ENCODE measurements at regions of chr5 and their contacts with region 1.

Region 1: GRCh38 chr5:172144291-172144815 is 43.7 kb downstream of the STK10 start:
- DNase-seq: peak in 7 of 10 donors; percentile 33 to 71 (median 57)
- H3K4me3 ChIP-seq: peak overlapping the region in 17 of 59 donors; percentile 1 to 35 (median 18)
- H3K27ac ChIP-seq: peak overlapping the region in 48 of 59 donors; percentile 7 to 85 (median 60)
- H3K27me3 ChIP-seq: no peaks in the 10 kb centered on the region
- CTCF ChIP-seq: peak in 1 of 56 donors; percentile 4

Region 2: GRCh38 chr5:172006321-172007174 is 137.8 kb before region 1 on chr5 and contains the start of gene FBXW11:
- intact Hi-C with region 1: no loop called
- DNase-seq: peak; percentile 95 to 98 (median 98)
- H3K4me3 ChIP-seq: peak within 1 kb of the TSS; percentile 72 to 100 (median 96)
- H3K27ac ChIP-seq: peak within 1 kb of the TSS; percentile 89 to 100 (median 98)
- H3K27me3 ChIP-seq: no peaks in the 10 kb centered on the region
- CTCF ChIP-seq: peak in 21 of 56 donors; percentile 5 to 53 (median 25)
- total RNA-seq, gene FBXW11: 88.4 to 136 (median 113) TPM

Region 3: DNA sequence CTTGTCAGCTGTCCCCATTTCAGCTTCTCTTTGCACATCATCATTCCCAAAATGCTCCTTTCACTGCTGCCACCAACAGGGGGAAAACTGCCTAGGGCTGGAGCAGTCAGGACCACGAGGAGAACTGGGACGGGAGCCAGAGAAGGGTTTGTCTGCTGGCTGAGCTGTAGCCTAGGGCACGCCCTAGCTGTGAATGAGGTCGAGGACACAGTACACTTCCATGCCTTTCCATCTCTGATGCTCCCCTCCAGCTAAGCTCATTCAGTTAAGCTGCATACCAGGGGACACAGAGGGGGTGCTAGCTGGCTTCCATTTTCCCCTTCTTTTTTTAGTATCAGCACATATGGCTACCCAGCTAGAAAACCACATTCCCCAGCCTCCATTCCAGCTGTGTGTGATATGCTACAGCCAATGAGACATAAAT is 21.1 kb before region 1 on chr5:
- intact Hi-C with region 1: no loop called
- DNase-seq: peak in 9 of 10 donors; percentile 47 to 85 (median 69)
- H3K4me3 ChIP-seq: no peak overlapping the region
- H3K27ac ChIP-seq: peak overlapping the region in 4 of 59 donors; percentile 14 to 63 (median 40)
- H3K27me3 ChIP-seq: no peaks in the 10 kb centered on the region
- CTCF ChIP-seq: peak in 46 of 56 donors; percentile 7 to 59 (median 38)

Region 4: GRCh38 chr5:172188033-172188892 is 43.9 kb after region 1 on chr5 and contains the start of gene STK10:
- intact Hi-C with region 1: loop called in 1 of 2 experiments (anchors 5 kb)
- DNase-seq: peak; percentile 78 to 94 (median 86)
- H3K4me3 ChIP-seq: peak within 1 kb of the TSS; percentile 68 to 98 (median 91)
- H3K27ac ChIP-seq: peak within 1 kb of the TSS; percentile 29 to 94 (median 85)
- H3K27me3 ChIP-seq: no peaks in the 10 kb centered on the region
- CTCF ChIP-seq: peak; percentile 44 to 97 (median 89)
- total RNA-seq, gene STK10: 4.5 to 28.7 (median 16.7) TPM

Region 5: GRCh38 chr5:172274921-172275753 is 130.8 kb after region 1 on chr5:
- intact Hi-C with region 1: no loop called
- DNase-seq: no peak
- H3K4me3 ChIP-seq: no peak overlapping the region
- H3K27ac ChIP-seq: no peak overlapping the region
- H3K27me3 ChIP-seq: no peaks in the 10 kb centered on the region
- CTCF ChIP-seq: no peak

Measured in dorsolateral prefrontal cortex (tissue), 120 donors.